Activated naive CD8-positive, alpha-beta T cell treated with anti-CD3 and anti-CD28 coated beads, Interleukin-2, amount 10 ng/mL, durations not matched to agents 7 days and 5 days (primary cell): ENCODE measurements at regions of chr9 and their contacts with region 1.

Region 1: DNA sequence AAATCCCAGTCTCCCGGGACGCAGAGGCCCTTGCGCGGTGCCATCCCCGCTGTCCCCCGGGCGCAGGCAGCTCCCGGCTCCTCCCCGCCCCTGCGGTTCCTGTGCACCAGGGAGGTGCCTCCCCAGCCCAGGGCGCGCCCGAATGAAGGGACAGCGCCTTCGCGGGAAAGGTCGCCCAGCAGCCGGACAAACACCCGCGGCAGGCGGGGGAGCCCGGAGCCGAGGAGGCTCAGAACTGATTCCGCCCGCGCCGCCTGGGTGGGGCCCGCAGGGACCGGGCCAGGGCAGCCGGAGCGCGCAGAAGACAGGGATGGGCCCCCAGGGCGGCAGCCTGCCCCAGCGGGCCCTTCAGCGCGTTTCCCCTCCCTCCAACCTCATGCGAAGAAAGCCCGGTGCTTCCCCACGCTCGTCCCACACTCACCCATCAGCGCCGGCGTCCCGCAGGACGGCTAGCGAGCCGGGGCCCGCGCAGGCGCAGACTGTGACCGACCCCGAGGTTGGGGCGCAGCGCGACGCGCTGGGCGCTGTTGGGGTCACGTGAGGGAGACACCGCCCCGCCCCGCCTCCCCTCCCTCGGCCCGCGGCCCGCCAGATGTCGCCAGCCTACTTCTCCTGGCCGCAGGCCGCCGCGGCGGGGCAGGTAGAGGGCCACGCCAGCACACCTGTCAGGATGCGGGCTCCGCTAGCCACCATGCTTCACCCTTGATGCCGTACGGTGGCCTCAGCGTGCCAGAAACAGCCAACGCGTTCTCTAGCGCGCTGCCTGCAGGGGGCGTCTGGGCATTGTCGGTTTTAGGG is at the start of gene SLC25A51:
- DNase-seq: peak; percentile 98
- ATAC-seq: peak; percentile 86
- H3K4me3 Mint-ChIP-seq: peak within 1 kb of the TSS; percentile 90
- H3K27ac Mint-ChIP-seq: peak within 1 kb of the TSS; percentile 90
- H3K4me1 Mint-ChIP-seq: peaks cover 21% of the 10 kb centered on the region
- H3K27me3 Mint-ChIP-seq: peaks cover 6% of the 10 kb centered on the region
- total RNA-seq, gene SLC25A51: 30.8 to 33.9 TPM

Region 2: GRCh38 chr9:37784616-37785483 is 119.0 kb before region 1 on chr9 and contains the start of gene EXOSC3:
- POLR2A ChIA-PET with region 1: interaction called, 12 read pairs
- DNase-seq: peak; percentile 88
- ATAC-seq: peak; percentile 92
- H3K4me3 Mint-ChIP-seq: peak within 1 kb of the TSS; percentile 98
- H3K27ac Mint-ChIP-seq: peak within 1 kb of the TSS; percentile 97
- H3K4me1 Mint-ChIP-seq: peaks cover 26% of the 10 kb centered on the region
- H3K27me3 Mint-ChIP-seq: no peaks in the 10 kb centered on the region
- total RNA-seq, gene EXOSC3: 67.8 to 72.1 TPM

Region 3: DNA sequence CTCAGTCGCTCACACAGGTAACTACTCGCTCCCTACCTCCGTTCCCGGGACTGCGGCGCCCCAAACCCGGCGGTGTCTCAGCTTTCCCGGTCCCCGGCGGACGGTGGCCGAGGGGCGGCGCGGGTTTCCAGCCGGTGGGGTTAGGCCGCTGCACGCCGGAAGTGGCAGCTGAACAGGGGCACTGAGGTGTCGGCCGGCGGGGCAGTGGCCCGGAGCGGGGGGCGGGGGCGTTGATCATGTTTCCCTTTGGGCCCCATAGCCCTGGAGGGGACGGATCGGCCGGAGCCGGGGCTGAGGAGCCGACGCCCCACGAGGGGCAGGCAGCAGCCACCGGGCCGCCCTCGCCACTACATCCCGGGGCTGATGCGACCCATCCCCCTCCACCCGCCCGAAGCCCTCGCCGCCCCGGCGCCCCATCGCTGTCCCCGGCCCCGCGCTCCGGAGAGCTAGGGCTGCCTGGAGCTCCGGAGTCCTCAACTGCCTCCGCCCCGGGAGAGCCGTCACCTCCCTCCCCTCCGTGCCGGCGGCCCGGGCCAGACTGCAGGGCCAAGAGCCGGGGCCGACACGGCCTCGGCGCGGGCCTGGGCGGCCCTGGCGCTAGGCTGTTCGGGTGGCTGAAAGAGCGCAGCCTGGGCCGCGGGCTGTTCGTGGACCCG is 103.1 kb before region 1 on chr9 and contains the start of gene DCAF10:
- POLR2A ChIA-PET with region 1: interaction called, 10 read pairs
- DNase-seq: peak; percentile 97
- ATAC-seq: peak; percentile 71
- H3K4me3 Mint-ChIP-seq: peak within 1 kb of the TSS; percentile 91
- H3K27ac Mint-ChIP-seq: peak within 1 kb of the TSS; percentile 72
- H3K4me1 Mint-ChIP-seq: peaks cover 35% of the 10 kb centered on the region
- H3K27me3 Mint-ChIP-seq: no peaks in the 10 kb centered on the region
- total RNA-seq, gene DCAF10: 19.5 to 19.8 TPM